ENCODE measurements at regions of chr5 and their contacts with region 1.

Region 1: GRCh38 chr5:55969956-55970355 is 24.8 kb downstream of the IL6ST start:
- DNase-seq: no peak
- H3K4me3 ChIP-seq: no peak overlapping the region
- H3K27ac ChIP-seq: no peak overlapping the region
- H3K4me1 ChIP-seq: peaks cover 0 to 9% (median 0%) of the 10 kb centered on the region in 4 donors
- H3K27me3 ChIP-seq: no peaks in the 10 kb centered on the region
- CTCF ChIP-seq: no peak

Region 2: DNA sequence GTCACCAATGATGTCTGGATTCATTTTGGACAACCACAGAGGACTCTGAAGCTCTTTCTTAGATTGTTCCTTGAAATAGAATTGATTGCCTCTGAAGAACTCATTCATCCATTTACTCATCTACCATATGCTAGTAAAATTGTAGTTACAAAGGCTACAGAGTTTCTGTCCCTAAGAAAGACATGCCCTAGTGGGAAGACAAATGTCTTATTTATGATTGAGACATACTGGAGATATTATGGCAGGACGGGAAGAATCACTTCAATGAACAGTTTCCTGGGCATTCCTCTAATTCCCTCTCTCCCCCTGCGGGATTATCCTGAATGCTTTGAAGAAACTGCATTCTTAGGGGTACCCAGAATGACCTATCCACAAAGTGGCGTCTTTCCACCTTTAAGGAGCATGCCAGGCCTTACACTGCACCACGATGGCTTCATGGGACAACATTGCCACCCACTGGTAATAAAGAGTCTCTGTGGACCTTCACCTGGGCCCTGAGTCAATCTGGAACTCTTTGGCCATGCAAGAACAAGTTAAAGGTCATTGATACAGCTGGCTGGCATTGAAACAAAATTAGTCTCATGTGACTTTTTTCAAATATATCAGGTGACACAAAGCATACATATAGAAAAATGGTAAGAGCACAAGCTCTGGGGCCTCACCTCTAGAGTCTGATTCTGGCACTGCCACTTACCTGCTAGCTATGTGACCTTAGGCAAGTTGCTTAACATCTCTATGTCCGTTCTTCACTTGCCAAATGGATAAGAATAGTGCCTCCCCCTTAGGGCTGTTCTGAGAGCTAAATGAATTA is 231.1 kb after region 1 on chr5:
- intact Hi-C with region 1: loop called (anchors 10 kb)
- DNase-seq: peak in 1 of 2 donors; percentile 37
- H3K4me3 ChIP-seq: no peak overlapping the region
- H3K27ac ChIP-seq: no peak overlapping the region
- H3K4me1 ChIP-seq: peaks cover 0 to 7% (median 0%) of the 10 kb centered on the region in 4 donors
- H3K27me3 ChIP-seq: no peaks in the 10 kb centered on the region
- CTCF ChIP-seq: peak; percentile 63 to 66

Measured in tibial artery (tissue), 4 donors.